ENCODE measurements at regions of chr15 and their contacts with region 1.

Region 1: GRCh38 chr15:89740137-89740536 is 10.9 kb downstream of the MESP1 start:
- DNase-seq: no peak
- H3K4me3 ChIP-seq: no peak overlapping the region
- CTCF ChIP-seq: peak; percentile 76

Region 2: GRCh38 chr15:89723031-89723430 is 17.1 kb before region 1 on chr15:
- CTCF ChIA-PET with region 1: interaction called, 18 read pairs
- POLR2A ChIA-PET with region 1: no interaction called
- DNase-seq: no peak
- H3K4me3 ChIP-seq: no peak overlapping the region
- CTCF ChIP-seq: no peak

Region 3: GRCh38 chr15:89728254-89728653 is 11.9 kb before region 1 on chr15:
- CTCF ChIA-PET with region 1: interaction called, 18 read pairs
- POLR2A ChIA-PET with region 1: no interaction called
- DNase-seq: no peak
- H3K4me3 ChIP-seq: no peak overlapping the region
- CTCF ChIP-seq: no peak

Region 4: GRCh38 chr15:89750560-89751542 is 10.7 kb after region 1 on chr15 and contains the start of gene MESP1:
- CTCF ChIA-PET with region 1: interaction called, 28 read pairs
- POLR2A ChIA-PET with region 1: no interaction called
- DNase-seq: no peak
- H3K4me3 ChIP-seq: peak within 1 kb of the TSS; percentile 61
- CTCF ChIP-seq: peak; percentile 88

Region 5: GRCh38 chr15:89863918-89864317 is 123.8 kb after region 1 on chr15:
- CTCF ChIA-PET with region 1: interaction called, 17 read pairs
- POLR2A ChIA-PET with region 1: no interaction called
- DNase-seq: no peak
- H3K4me3 ChIP-seq: no peak overlapping the region
- CTCF ChIP-seq: no peak

Region 6: GRCh38 chr15:89888214-89888804 is 148.2 kb after region 1 on chr15:
- CTCF ChIA-PET with region 1: interaction called, 180 read pairs
- POLR2A ChIA-PET with region 1: no interaction called
- DNase-seq: peak; percentile 69
- H3K4me3 ChIP-seq: no peak overlapping the region
- CTCF ChIP-seq: peak; percentile 53

Region 7: GRCh38 chr15:89893696-89894455 is 153.7 kb after region 1 on chr15 and contains the start of gene AP3S2:
- CTCF ChIA-PET with region 1: interaction called, 180 read pairs
- POLR2A ChIA-PET with region 1: interaction called, 3 read pairs
- DNase-seq: peak; percentile 62
- H3K4me3 ChIP-seq: peak within 1 kb of the TSS; percentile 91
- CTCF ChIP-seq: no peak

Region 8: DNA sequence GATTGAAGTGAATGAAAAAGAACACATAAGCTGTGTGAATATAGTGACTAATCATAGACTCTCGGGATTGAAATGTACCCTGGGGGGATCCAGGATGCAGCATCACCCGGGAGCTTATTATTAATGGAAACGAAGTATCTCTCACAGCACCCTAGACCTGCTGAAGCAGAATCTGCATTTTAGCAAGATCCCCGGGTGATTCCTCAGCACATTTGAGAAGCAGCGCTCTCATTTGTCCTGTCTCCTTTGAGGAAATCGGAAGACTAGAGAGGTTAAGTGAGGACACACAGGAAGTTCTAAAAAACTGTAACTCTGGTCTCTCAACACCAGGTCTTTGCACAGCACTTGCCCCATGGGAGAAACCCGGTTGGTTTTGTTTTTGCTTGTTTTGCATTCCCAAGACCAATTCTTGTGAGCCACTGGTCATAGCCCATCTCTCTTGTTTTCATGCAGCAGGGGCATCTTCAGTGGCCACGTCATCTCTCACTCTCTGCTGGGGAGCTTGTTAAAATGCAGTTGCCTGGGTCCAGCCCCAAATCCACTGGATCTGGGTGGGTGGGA is 291.2 kb after region 1 on chr15:
- CTCF ChIA-PET with region 1: no interaction called
- POLR2A ChIA-PET with region 1: no interaction called
- DNase-seq: no peak
- H3K4me3 ChIP-seq: no peak overlapping the region
- CTCF ChIP-seq: no peak